ENCODE measurements at regions of chr3 and their contacts with region 1.

Region 1: GRCh38 chr3:112013058-112013783 is 14.5 kb downstream of the TAGLN3 start:
- DNase-seq: no peak
- H3K4me3 ChIP-seq: no peak overlapping the region
- H3K27me3 ChIP-seq: no peaks in the 10 kb centered on the region
- CTCF ChIP-seq: peak; percentile 75

Region 2: GRCh38 chr3:111668912-111669488 is 344.2 kb before region 1 on chr3:
- CTCF ChIA-PET with region 1: interaction called, 23 read pairs
- POLR2A ChIA-PET with region 1: no interaction called
- DNase-seq: no peak
- H3K4me3 ChIP-seq: no peak overlapping the region
- H3K27me3 ChIP-seq: no peaks in the 10 kb centered on the region
- CTCF ChIP-seq: peak; percentile 75

Region 3: DNA sequence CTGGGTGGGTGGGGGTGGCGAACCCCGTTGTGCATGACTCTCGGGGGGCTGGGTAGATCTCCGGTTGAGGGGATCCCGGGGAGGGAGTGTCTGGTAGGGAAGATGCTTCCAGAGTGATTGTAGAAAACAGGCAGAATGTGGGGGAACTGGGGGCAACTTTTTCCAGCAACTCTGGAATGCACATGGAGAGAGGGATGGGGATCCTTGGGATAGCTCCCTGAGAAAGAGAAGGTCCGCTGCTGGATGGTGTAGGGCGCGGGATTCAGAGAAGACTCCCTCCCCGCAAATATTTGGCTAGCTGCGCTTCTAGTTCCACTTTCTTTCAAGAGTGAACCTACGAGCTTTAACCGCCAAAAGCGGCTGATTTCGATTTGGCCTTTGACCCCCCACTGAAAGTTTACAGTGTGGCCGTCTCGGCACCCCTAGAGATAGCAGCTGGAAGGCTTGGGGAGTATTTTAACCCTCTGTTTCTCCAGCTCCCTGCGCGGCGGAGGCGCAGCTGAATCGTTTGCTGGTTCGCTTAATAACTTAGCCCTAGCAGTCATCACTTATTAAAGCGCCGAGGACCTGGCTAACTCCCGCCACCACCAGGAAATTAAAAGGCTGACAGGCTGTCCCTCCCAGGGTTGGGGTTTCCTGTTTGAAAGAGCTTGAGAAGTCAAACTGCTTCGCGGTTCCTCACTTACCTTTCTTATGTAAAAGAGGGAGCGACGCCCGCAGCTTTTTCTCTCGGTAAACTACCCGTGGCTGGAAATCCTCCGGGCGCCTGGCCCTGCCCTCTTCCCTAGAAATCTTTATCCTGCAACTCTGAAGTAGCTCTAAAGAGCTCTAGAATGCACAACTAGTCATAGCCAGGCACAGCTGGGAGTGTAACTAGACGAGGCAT is 153.0 kb before region 1 on chr3:
- CTCF ChIA-PET with region 1: interaction called, 10 read pairs
- POLR2A ChIA-PET with region 1: no interaction called
- DNase-seq: peak; percentile 64
- H3K4me3 ChIP-seq: peak overlapping the region; percentile 85
- H3K27me3 ChIP-seq: no peaks in the 10 kb centered on the region
- CTCF ChIP-seq: peak; percentile 66

Region 4: GRCh38 chr3:111874177-111874820 is 138.9 kb before region 1 on chr3:
- CTCF ChIA-PET with region 1: no interaction called
- POLR2A ChIA-PET with region 1: no interaction called
- DNase-seq: no peak
- H3K4me3 ChIP-seq: no peak overlapping the region
- H3K27me3 ChIP-seq: no peaks in the 10 kb centered on the region
- CTCF ChIP-seq: no peak

Region 5: GRCh38 chr3:111910806-111911205 is 102.4 kb before region 1 on chr3:
- CTCF ChIA-PET with region 1: no interaction called
- POLR2A ChIA-PET with region 1: no interaction called
- DNase-seq: peak; percentile 75
- H3K4me3 ChIP-seq: no peak overlapping the region
- H3K27me3 ChIP-seq: no peaks in the 10 kb centered on the region
- CTCF ChIP-seq: no peak

Region 6: DNA sequence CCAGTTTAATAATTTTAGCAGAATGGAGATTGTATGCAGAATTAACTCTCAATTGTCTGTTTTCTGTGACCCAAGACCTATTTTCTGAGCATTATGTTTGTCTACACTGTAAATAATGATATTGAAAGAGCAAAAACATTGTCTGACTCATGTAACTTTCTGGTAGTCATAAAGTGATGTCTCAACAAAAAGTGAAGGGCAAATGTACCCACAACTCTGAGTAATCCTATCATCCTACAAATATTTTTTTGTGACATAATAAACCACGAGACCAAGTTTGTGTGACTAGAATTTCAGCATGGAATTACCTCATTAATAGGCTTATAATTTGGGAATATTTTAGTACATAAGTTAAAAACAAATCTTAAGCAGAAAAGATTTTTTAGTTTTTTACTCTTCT is 49.8 kb before region 1 on chr3:
- CTCF ChIA-PET with region 1: no interaction called
- POLR2A ChIA-PET with region 1: no interaction called
- DNase-seq: peak; percentile 71
- H3K4me3 ChIP-seq: no peak overlapping the region
- H3K27me3 ChIP-seq: no peaks in the 10 kb centered on the region
- CTCF ChIP-seq: no peak

Region 7: DNA sequence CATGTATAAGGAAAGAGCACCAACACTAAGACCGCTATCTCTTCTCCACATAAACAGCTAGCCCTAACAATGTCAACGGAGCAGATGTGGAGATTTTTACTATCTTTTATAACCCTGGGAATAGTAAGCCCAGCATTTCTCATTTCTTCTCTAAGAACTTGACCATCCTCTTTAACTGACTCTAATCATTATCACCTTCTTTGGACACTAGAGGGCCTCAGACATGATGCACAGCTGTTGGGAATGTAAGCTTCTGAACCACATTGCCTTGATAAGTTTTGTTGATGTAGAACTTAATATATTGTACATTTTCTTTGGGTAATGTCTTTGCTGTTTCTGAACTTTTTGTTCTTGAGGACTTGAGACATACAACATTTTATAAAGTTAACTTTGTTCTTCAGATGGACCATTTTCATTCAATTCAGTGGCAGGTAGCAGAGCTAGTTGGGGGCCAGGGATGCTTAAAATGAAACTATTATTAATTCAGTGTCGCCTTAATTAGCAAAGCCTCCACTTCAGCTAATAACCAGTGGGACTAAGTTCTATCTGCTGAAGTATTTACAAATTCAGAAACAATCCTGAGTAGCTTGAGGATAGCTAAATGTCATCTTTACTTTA is 24.1 kb before region 1 on chr3:
- CTCF ChIA-PET with region 1: interaction called, 203 read pairs
- POLR2A ChIA-PET with region 1: no interaction called
- DNase-seq: peak; percentile 25
- H3K4me3 ChIP-seq: no peak overlapping the region
- H3K27me3 ChIP-seq: no peaks in the 10 kb centered on the region
- CTCF ChIP-seq: peak; percentile 79

Region 8: GRCh38 chr3:111998636-111999483 is 14.4 kb before region 1 on chr3 and contains the start of gene TAGLN3:
- CTCF ChIA-PET with region 1: interaction called, 203 read pairs
- POLR2A ChIA-PET with region 1: no interaction called
- DNase-seq: no peak
- H3K4me3 ChIP-seq: peak within 1 kb of the TSS; percentile 36
- H3K27me3 ChIP-seq: no peaks in the 10 kb centered on the region
- CTCF ChIP-seq: no peak
- polyA plus RNA-seq, gene TAGLN3: 0.09 TPM in 1 of 2 replicates, not detected in the other

Region 9: GRCh38 chr3:112043603-112044201 is 30.5 kb after region 1 on chr3:
- CTCF ChIA-PET with region 1: interaction called, 13 read pairs
- POLR2A ChIA-PET with region 1: no interaction called
- DNase-seq: no peak
- H3K4me3 ChIP-seq: no peak overlapping the region
- H3K27me3 ChIP-seq: no peaks in the 10 kb centered on the region
- CTCF ChIP-seq: peak; percentile 91

Measured in BJ (cell line).